A549 (cell line): ENCODE measurements at regions of chr1 and their contacts with region 1.

Region 1: DNA sequence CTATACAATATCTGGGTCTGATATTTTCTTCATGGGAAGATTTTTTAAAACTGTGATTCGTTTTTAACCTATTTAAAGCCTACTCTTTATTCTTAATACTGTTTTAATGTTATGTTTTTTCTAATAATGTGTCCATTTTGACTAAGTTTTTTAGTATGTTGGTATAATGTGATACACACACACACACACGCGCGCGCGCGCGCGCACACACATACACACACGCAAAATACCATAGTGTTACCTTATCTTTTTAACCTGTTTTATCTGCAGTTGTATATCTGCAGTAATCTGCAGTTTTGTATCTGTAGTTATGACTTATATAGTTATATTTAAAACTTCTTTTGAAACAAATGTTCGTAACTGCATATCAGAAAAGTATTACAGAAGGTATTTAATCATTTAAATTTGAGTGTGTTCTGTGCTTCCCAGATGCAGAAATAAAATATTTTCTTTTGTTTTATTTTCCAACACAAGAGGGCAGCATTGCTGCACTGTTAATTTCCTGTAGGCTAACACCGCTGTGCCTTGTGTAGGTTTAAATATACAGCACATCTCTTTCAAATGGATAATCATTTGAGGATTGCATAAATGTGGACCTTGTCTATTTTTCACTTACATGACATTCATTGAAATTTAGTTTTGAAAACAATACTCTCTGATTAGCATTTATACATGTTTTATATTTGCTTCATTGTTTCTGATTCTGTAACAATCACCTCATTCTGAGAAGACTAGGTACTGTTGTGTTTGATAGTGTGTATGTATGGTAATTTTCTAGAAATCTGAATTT is 166.1 kb downstream of the PDE4B start:
- DNase-seq: peak; percentile 6 to 65
- ATAC-seq: peak; percentile 59 to 82; a peak in 4 of 6 replicates
- H3K4me3 ChIP-seq: no peak overlapping the region
- H3K27ac ChIP-seq: peak overlapping the region; percentile 66 to 79
- H3K4me1 ChIP-seq: peaks cover 36% of the 10 kb centered on the region
- CTCF ChIP-seq: peak; percentile 89
- EP300 ChIP-seq: no peak
- POLR2A ChIP-seq: no peak
- RAD21 ChIP-seq: peak; percentile 95 to 97

Region 2: DNA sequence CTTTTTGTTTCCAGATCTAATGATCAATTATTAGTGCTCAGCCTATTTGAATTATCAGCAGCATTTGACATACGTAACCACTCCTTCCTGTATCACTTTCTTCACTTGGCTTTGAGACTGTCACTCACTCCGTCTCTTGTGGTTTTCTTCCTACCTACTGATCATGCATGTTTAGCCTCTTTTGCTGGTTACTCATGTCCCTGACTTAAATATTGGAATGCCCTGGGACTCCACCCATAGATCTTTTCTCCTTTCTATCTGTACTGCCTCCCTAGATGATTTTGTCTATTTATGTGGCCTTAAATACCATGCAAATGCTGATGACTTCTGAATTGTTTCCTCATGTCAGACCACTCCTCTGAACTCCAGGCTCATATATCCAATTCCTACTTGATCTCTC is 223.8 kb before region 1 on chr1:
- CTCF ChIA-PET with region 1: no interaction called
- POLR2A ChIA-PET with region 1: no interaction called
- DNase-seq: no peak
- ATAC-seq: no peak
- H3K4me3 ChIP-seq: no peak overlapping the region
- H3K27ac ChIP-seq: no peak overlapping the region
- H3K4me1 ChIP-seq: no peaks in the 10 kb centered on the region
- CTCF ChIP-seq: no peak
- EP300 ChIP-seq: no peak
- POLR2A ChIP-seq: no peak
- RAD21 ChIP-seq: no peak

Region 3: GRCh38 chr1:65812065-65812464 is 146.7 kb before region 1 on chr1:
- CTCF ChIA-PET with region 1: no interaction called
- POLR2A ChIA-PET with region 1: no interaction called
- DNase-seq: no peak
- ATAC-seq: no peak
- H3K4me3 ChIP-seq: no peak overlapping the region
- H3K27ac ChIP-seq: peak overlapping the region in 1 of 2 experiments; percentile 40; a peak in 1 of 6 replicates
- H3K4me1 ChIP-seq: no peaks in the 10 kb centered on the region
- CTCF ChIP-seq: no peak
- EP300 ChIP-seq: no peak
- POLR2A ChIP-seq: no peak
- RAD21 ChIP-seq: no peak

Region 4: DNA sequence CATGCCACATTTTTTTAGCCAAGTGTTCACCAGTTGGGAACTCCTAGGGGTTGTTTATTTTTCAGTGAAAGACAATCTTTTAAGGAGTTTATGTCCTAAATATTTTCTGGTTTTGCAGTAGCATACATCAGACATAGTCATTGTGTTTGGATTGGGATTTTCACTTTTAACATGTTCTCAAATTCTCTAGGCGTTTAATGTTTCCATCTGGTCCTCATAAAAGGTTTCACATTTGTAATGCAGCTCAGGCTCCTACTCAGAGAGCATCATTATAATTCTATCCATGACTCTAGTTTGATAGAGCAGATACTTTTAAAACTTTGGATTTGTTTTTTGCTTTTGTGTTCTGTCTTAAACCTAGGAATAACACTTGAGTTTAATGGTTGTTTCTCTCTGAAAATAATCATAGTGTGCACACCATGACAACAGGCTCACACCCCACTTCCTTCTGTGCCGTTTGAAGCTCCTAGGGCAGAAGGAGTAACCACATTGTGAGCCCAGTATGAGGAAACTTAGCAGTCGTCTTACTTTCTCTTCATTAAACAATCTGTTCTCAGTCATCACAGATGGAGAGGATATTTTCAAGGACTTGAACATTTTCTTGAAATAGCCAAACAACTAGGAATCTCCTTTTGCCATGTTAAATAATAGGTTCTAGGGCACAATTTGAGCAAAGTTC is 53.5 kb after region 1 on chr1:
- CTCF ChIA-PET with region 1: no interaction called
- POLR2A ChIA-PET with region 1: no interaction called
- DNase-seq: no peak
- ATAC-seq: 0 out of 6 replicates have a peak, but pooled peaks of 1 of the 2 experiments have one; percentile 34
- H3K4me3 ChIP-seq: no peak overlapping the region
- H3K27ac ChIP-seq: 0 out of 6 replicates have a peak overlapping the region, but pooled peaks of 1 of the 2 experiments have one; percentile 26
- H3K4me1 ChIP-seq: 0 out of 3 replicates have a peak, but pooled peaks cover 4% of the 10 kb centered on the region
- CTCF ChIP-seq: no peak
- EP300 ChIP-seq: no peak
- POLR2A ChIP-seq: no peak
- RAD21 ChIP-seq: no peak

Region 5: DNA sequence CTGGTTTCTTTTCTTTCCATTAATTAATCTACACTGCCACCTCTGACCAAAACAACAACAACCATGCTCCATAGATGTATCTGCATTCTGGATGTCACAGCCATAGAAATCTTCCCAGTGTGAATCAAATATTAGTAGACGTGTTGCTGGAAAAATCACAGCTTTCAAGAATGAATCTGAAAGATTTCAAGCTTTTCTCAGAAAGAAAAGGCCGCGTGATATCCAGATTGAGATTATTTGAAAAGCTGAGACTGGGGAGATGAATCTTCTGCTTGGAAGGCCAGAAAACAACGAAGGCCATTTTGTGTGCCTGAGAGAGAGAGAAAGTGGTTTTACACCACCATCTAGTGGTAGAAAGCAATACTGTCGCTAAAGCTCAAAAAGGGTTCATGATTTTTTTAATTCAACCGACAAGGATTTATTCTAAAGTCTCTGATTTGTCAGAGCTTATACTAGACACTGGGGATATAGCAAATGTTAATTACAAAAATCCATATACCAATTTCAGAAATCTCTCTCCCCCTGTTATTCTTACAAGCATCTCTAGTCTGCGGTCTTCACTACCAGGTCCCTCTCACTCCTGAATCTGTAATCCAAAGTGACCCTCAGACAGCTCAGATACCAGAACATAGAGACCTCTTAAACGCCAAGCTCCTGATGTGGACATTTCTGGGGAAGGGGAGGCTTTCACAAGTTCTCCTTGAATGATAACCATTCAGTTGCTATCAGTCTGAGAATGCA is 487.7 kb after region 1 on chr1:
- CTCF ChIA-PET with region 1: interaction called, 28 read pairs
- POLR2A ChIA-PET with region 1: no interaction called
- DNase-seq: peak; percentile 25 to 68
- ATAC-seq: peak; percentile 68 to 87
- H3K4me3 ChIP-seq: no peak overlapping the region
- H3K27ac ChIP-seq: peak overlapping the region; percentile 67 to 83
- H3K4me1 ChIP-seq: peaks cover 27% of the 10 kb centered on the region
- CTCF ChIP-seq: peak; percentile 80
- EP300 ChIP-seq: no peak
- POLR2A ChIP-seq: no peak
- RAD21 ChIP-seq: peak; percentile 89 to 93